IMR-90 (cell line): ENCODE measurements at regions of chr2 and their contacts with region 1.

Region 1: DNA sequence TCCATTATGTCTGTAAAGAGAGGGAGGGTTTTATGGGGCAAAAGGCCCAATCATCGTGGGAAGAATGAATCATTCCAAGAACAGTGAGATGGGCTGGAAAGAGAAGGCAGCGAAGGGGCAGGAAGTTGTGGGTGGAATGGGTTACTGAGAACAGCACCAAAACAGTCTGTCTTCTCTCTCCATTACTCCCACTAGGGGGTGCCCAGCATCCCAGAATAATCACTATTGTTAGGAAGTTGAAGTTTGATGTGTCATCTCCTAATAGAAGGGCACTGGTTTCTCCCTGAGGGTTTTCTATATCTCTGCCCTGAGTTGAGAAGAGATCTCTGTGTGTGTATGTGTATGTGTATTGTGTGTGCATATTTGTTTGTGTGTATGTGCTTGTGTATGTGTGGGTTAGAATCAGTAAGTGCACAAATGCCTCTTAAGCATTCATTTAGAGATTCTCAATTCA is 76.6 kb upstream of the MAP4K3 start:
- DNase-seq: peak; percentile 97
- ATAC-seq: peak; percentile 91
- H3K4me3 ChIP-seq: no peak overlapping the region
- H3K27ac ChIP-seq: peak overlapping the region; percentile 42
- H3K4me1 ChIP-seq: peaks cover 31% of the 10 kb centered on the region
- H3K27me3 ChIP-seq: no peaks in the 10 kb centered on the region
- CTCF ChIP-seq: peak; percentile 86
- POLR2A ChIP-seq: 0 out of 2 replicates have a peak, but pooled peaks have one; percentile 35
- RAD21 ChIP-seq: peak; percentile 87

Region 2: GRCh38 chr2:39593439-39594393 is 80.0 kb after region 1 on chr2:
- CTCF ChIA-PET with region 1: interaction called, 5 read pairs
- POLR2A ChIA-PET with region 1: no interaction called
- dilution Hi-C with region 1: no loop called
- in situ Hi-C with region 1: no loop called
- intact Hi-C with region 1: loop called (anchors 2 kb)
- DNase-seq: peak; percentile 88
- ATAC-seq: peak; percentile 98
- H3K4me3 ChIP-seq: no peak overlapping the region
- H3K27ac ChIP-seq: no peak overlapping the region
- H3K4me1 ChIP-seq: peaks cover 5% of the 10 kb centered on the region; the same call in 1 of the 2 replicates
- H3K27me3 ChIP-seq: no peaks in the 10 kb centered on the region
- CTCF ChIP-seq: peak; percentile 79
- POLR2A ChIP-seq: no peak
- RAD21 ChIP-seq: peak; percentile 80

Region 3: DNA sequence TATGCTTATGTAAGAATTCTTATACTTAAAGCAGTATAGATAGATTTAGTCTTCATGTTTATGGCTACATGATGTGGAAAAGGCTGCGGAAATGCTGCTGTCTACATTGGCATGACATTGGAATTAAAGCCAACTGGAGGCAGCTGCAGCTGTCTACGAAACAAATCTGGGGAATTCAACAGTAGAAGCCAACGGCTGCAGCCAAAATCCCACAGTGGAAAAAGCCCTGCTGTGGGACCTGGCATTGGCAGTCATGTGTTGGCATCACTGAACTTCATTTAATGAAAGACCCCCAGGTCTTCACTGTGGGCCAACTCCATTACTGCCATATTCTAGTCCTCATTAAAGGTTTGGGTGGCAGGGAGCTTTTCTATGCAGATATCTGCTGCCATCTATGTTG is 714.6 kb after region 1 on chr2:
- CTCF ChIA-PET with region 1: no interaction called
- POLR2A ChIA-PET with region 1: interaction called, 10 read pairs
- dilution Hi-C with region 1: no loop called
- in situ Hi-C with region 1: no loop called
- intact Hi-C with region 1: no loop called
- DNase-seq: no peak
- ATAC-seq: no peak
- H3K4me3 ChIP-seq: no peak overlapping the region
- H3K27ac ChIP-seq: no peak overlapping the region
- H3K4me1 ChIP-seq: peaks cover 6% of the 10 kb centered on the region
- H3K27me3 ChIP-seq: no peaks in the 10 kb centered on the region
- CTCF ChIP-seq: no peak
- POLR2A ChIP-seq: no peak
- RAD21 ChIP-seq: no peak